HepG2 (cell line): ENCODE measurements at regions of chr1 and their contacts with region 1.

Region 1: GRCh38 chr1:45521398-45522323 is at the start of gene PRDX1:
- DNase-seq: peak; percentile 94
- ATAC-seq: peak; percentile 82
- H3K4me3 ChIP-seq: peak within 1 kb of the TSS; percentile 95 to 99 (median 96)
- H3K27ac ChIP-seq: peak within 1 kb of the TSS; percentile 100
- H3K4me1 ChIP-seq: peaks cover 72% of the 10 kb centered on the region
- H3K27me3 ChIP-seq: no peaks in the 10 kb centered on the region; a peak in 1 of 5 replicates
- CTCF ChIP-seq: peak; percentile 47
- EP300 ChIP-seq: peak in 1 of 2 experiments; percentile 85; a peak in 3 of 4 replicates
- POLR2A ChIP-seq: peak; percentile 99 to 100
- RAD21 ChIP-seq: peak; percentile 66
- total RNA-seq, gene PRDX1: 1,898 and 2,651 TPM in 2 replicates

Region 2: DNA sequence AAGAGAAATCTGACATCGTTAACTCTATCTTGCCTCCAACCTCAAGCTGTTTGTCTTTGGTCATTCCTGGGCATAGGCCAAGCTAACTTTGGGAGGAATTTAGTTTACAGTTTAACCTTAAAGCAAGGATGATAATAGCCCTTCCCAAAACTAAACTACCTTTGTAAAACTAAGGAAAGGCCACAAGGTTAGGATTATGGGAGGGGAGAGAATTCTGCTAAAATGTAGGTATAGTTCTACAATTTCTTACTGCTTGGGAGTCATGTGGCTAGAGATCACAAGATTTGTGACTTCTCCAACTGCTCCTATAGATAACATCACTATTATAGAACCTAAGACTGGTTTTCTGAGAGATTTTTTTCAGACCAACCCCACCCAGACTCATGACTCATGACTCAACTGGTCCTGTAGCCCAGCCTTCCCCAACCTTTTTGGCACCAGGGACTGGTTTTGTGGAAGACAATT is 110.8 kb before region 1 on chr1:
- CTCF ChIA-PET with region 1: no interaction called
- POLR2A ChIA-PET with region 1: no interaction called
- in situ Hi-C with region 1: no loop called
- intact Hi-C with region 1: no loop called
- DNase-seq: no peak
- ATAC-seq: no peak
- H3K4me3 ChIP-seq: no peak overlapping the region
- H3K27ac ChIP-seq: no peak overlapping the region
- H3K4me1 ChIP-seq: peaks cover 21% of the 10 kb centered on the region
- H3K27me3 ChIP-seq: no peaks in the 10 kb centered on the region
- CTCF ChIP-seq: no peak
- EP300 ChIP-seq: no peak
- POLR2A ChIP-seq: no peak
- RAD21 ChIP-seq: no peak

Region 3: GRCh38 chr1:45490626-45491486 is 30.8 kb before region 1 on chr1 and contains the start of gene TESK2:
- CTCF ChIA-PET with region 1: no interaction called
- POLR2A ChIA-PET with region 1: interaction called, 20 read pairs
- in situ Hi-C with region 1: no loop called
- intact Hi-C with region 1: no loop called
- DNase-seq: peak; percentile 100
- ATAC-seq: peak; percentile 93
- H3K4me3 ChIP-seq: peak within 1 kb of the TSS; percentile 90 to 98 (median 93)
- H3K27ac ChIP-seq: peak within 1 kb of the TSS; percentile 78
- H3K4me1 ChIP-seq: peaks cover 29% of the 10 kb centered on the region
- H3K27me3 ChIP-seq: no peaks in the 10 kb centered on the region; a peak in 1 of 5 replicates
- CTCF ChIP-seq: no peak; the same call in 1 of the 2 replicates
- EP300 ChIP-seq: no peak
- POLR2A ChIP-seq: peak; percentile 90
- RAD21 ChIP-seq: peak; percentile 42; the same call in 1 of the 2 replicates
- total RNA-seq, gene TESK2: 5.5 and 6.9 TPM in 2 replicates

Region 4: GRCh38 chr1:45543581-45544417 is 22.1 kb after region 1 on chr1:
- CTCF ChIA-PET with region 1: no interaction called
- POLR2A ChIA-PET with region 1: interaction called, 690 read pairs
- in situ Hi-C with region 1: no loop called
- intact Hi-C with region 1: loop called (anchors 1 kb)
- DNase-seq: peak; percentile 31
- ATAC-seq: peak; percentile 67
- H3K4me3 ChIP-seq: peak overlapping the region; percentile 40 to 51 (median 42); a peak in 5 of 6 replicates
- H3K27ac ChIP-seq: peak overlapping the region; percentile 86
- H3K4me1 ChIP-seq: peaks cover 49% of the 10 kb centered on the region
- H3K27me3 ChIP-seq: no peaks in the 10 kb centered on the region
- CTCF ChIP-seq: no peak
- EP300 ChIP-seq: no peak
- POLR2A ChIP-seq: no peak
- RAD21 ChIP-seq: no peak

Region 5: GRCh38 chr1:45563843-45564242 is 42.2 kb after region 1 on chr1:
- CTCF ChIA-PET with region 1: no interaction called
- POLR2A ChIA-PET with region 1: interaction called, 690 read pairs
- in situ Hi-C with region 1: no loop called
- intact Hi-C with region 1: no loop called
- DNase-seq: no peak
- ATAC-seq: no peak
- H3K4me3 ChIP-seq: no peak overlapping the region
- H3K27ac ChIP-seq: no peak overlapping the region
- H3K4me1 ChIP-seq: peaks cover 24% of the 10 kb centered on the region
- H3K27me3 ChIP-seq: no peaks in the 10 kb centered on the region
- CTCF ChIP-seq: no peak
- EP300 ChIP-seq: no peak
- POLR2A ChIP-seq: no peak
- RAD21 ChIP-seq: no peak

Region 6: GRCh38 chr1:45583264-45583665 is 61.6 kb after region 1 on chr1:
- CTCF ChIA-PET with region 1: no interaction called
- POLR2A ChIA-PET with region 1: interaction called, 79 read pairs
- in situ Hi-C with region 1: no loop called
- intact Hi-C with region 1: no loop called
- DNase-seq: peak; percentile 95
- ATAC-seq: peak; percentile 90
- H3K4me3 ChIP-seq: peak overlapping the region; percentile 90 to 96 (median 95)
- H3K27ac ChIP-seq: peak overlapping the region; percentile 98
- H3K4me1 ChIP-seq: peaks cover 32% of the 10 kb centered on the region
- H3K27me3 ChIP-seq: no peaks in the 10 kb centered on the region; a peak in 2 of 5 replicates
- CTCF ChIP-seq: no peak
- EP300 ChIP-seq: no peak
- POLR2A ChIP-seq: no peak
- RAD21 ChIP-seq: no peak